ENCODE measurements at regions of chr12 and their contacts with region 1.

Region 1: DNA sequence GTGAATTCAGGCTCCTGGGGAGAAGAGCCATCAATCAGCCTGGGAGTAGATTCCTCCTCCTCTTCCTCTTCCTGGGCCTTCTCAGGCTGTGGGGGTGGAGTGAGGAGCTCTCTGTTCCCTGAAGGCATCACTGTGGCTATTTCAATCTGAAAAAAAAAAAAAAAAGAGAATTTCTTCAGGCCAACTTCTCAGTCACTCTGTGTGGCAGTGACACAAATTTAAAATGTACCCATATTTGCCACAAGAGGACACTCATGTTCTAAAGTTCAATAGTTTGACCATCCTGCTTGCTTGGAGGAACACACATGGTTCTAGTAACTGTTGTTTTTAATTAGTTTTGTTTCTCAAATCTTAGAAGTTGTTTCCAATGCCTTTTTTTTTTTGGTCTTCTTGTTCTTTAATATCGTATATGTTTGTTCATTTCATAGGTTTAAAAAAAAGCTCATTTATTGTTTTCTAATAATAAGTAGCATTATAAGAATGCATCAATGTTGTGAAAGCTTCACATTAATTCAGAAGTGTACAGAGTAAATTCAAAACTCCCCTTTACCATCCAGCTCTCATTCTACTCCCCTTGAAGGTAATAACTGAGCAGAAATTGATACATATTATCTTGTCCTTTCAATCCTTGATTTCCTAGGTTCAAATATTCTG is 23.3 kb upstream of the CCER1 start:
- DNase-seq: peak in 1 of 4 donors; percentile 13
- ATAC-seq: peak; percentile 67
- H3K4me3 ChIP-seq: no peak overlapping the region
- H3K27ac ChIP-seq: no peak overlapping the region
- H3K4me1 ChIP-seq: no peaks in the 10 kb centered on the region
- H3K27me3 ChIP-seq: no peaks in the 10 kb centered on the region
- CTCF ChIP-seq: peak in 6 of 7 experiments; percentile 22 to 72 (median 68)
- POLR2A ChIP-seq: no peak

Region 2: DNA sequence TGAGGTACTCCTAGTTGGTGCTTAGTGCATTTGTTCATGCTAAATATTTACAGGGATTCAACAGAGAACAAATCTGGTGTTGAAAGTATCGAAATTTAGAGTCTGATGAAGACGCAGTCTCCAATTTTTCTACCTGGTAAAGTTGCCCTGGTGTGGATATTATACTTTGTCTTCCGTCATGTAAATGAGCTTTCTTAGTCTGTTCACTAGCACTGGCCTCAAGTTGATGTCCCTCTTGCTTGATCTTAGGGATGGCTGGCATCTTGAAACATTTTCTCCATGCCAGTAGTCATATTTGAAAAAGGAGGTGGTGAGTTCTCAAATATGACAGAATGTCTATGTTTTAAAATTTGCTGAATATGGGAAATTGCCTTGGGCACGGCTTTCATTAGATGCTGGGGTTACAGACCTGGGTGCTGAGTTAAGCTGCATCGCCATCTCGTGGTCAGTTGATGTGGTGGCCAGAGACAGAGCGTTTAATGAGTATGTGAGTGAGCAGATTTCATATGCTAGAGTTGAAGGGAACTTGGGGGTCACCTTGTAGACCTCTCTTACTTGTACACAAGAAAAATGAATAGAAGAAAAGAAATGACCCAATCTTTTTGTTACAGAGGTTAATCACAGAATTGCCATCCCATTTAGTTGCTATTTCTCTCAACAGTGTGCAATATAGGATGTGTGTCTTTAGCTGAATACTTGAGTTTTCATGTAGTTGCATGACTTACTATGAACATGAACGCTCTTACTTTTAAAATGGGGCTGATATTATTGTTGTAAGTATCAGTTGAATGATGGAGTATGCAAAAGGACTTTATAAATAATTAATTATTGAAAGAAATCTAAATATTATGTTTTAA is 377.1 kb after region 1 on chr12:
- intact Hi-C with region 1: loop called (anchors 10 kb)
- DNase-seq: peak; percentile 71 to 77 (median 74)
- ATAC-seq: peak; percentile 92
- H3K4me3 ChIP-seq: no peak overlapping the region
- H3K27ac ChIP-seq: no peak overlapping the region
- H3K4me1 ChIP-seq: no peaks in the 10 kb centered on the region
- H3K27me3 ChIP-seq: no peaks in the 10 kb centered on the region
- CTCF ChIP-seq: peak; percentile 48 to 88 (median 82)
- POLR2A ChIP-seq: no peak

Measured in body of pancreas (tissue), 4 donors.